Heart left ventricle (tissue), 16 donors: ENCODE measurements at regions of chr20 and their contacts with region 1.

Region 1: GRCh38 chr20:51541189-51542032 is 1.1 kb downstream of the NFATC2 start:
- DNase-seq: peak; percentile 82 to 92 (median 87)
- ATAC-seq: peak; percentile 92 to 95 (median 92)
- H3K4me3 ChIP-seq: peak overlapping the region in 10 of 12 donors; percentile 35 to 69 (median 54)
- H3K27ac ChIP-seq: peak overlapping the region; percentile 57 to 89 (median 78)
- H3K4me1 ChIP-seq: peaks cover 4 to 44% (median 34%) of the 10 kb centered on the region in 12 donors
- H3K27me3 ChIP-seq: peaks cover 0 to 10% (median 0%) of the 10 kb centered on the region in 9 donors
- CTCF ChIP-seq: peak in 1 of 12 donors; percentile 30
- POLR2A ChIP-seq: no peak

Region 2: GRCh38 chr20:51354769-51355319 is 186.6 kb before region 1 on chr20:
- intact Hi-C with region 1: no loop called
- DNase-seq: no peak
- ATAC-seq: peak in 1 of 4 donors; percentile 27
- H3K4me3 ChIP-seq: no peak overlapping the region
- H3K27ac ChIP-seq: no peak overlapping the region
- H3K4me1 ChIP-seq: peaks cover 0 to 5% (median 0%) of the 10 kb centered on the region in 12 donors
- H3K27me3 ChIP-seq: no peaks in the 10 kb centered on the region
- CTCF ChIP-seq: no peak
- POLR2A ChIP-seq: no peak

Region 3: GRCh38 chr20:51423290-51423667 is 118.1 kb before region 1 on chr20:
- intact Hi-C with region 1: no loop called
- DNase-seq: no peak
- ATAC-seq: no peak
- H3K4me3 ChIP-seq: no peak overlapping the region
- H3K27ac ChIP-seq: no peak overlapping the region
- H3K4me1 ChIP-seq: peaks cover 0 to 23% (median 7%) of the 10 kb centered on the region in 12 donors
- H3K27me3 ChIP-seq: no peaks in the 10 kb centered on the region
- CTCF ChIP-seq: no peak
- POLR2A ChIP-seq: no peak

Region 4: DNA sequence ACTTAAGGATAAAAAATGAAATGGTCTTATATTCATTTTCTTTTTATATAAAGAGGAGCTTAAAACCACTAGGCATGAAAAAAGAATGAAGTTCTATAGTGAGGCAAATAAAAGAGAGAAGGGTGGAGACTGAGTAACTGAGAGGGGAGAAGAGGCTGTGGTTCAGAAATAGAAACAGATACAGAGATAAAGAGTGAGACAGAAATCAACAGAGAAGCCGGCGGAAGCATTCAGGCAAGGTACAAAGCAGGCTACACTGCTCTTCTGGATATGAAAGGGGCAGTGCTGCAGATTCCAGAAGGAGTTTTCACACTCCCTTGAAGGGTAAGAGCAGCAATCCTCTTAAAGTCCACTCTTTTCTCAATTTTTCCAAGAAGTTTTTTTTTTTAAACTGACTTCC is 28.8 kb before region 1 on chr20:
- intact Hi-C with region 1: no loop called
- DNase-seq: no peak
- ATAC-seq: no peak
- H3K4me3 ChIP-seq: no peak overlapping the region
- H3K27ac ChIP-seq: peak overlapping the region in 1 of 12 donors; percentile 30
- H3K4me1 ChIP-seq: peaks cover 0 to 26% (median under 1%) of the 10 kb centered on the region in 12 donors
- H3K27me3 ChIP-seq: no peaks in the 10 kb centered on the region
- CTCF ChIP-seq: no peak
- POLR2A ChIP-seq: no peak

Region 5: GRCh38 chr20:51595058-51595532 is 53.7 kb after region 1 on chr20:
- intact Hi-C with region 1: loop called in 1 of 10 experiments (anchors 10 kb)
- DNase-seq: peak; percentile 86 to 92 (median 89)
- ATAC-seq: peak; percentile 96 to 99 (median 97)
- H3K4me3 ChIP-seq: peak overlapping the region in 1 of 12 donors; percentile 17
- H3K27ac ChIP-seq: peak overlapping the region in 2 of 12 donors; percentile 1 to 7
- H3K4me1 ChIP-seq: peaks cover 0 to 14% (median 4%) of the 10 kb centered on the region in 12 donors
- H3K27me3 ChIP-seq: no peaks in the 10 kb centered on the region
- CTCF ChIP-seq: peak; percentile 81 to 92 (median 87)
- POLR2A ChIP-seq: no peak

Region 6: GRCh38 chr20:51650685-51651134 is 109.3 kb after region 1 on chr20:
- intact Hi-C with region 1: no loop called
- DNase-seq: no peak
- ATAC-seq: peak in 1 of 4 donors; percentile 52
- H3K4me3 ChIP-seq: no peak overlapping the region
- H3K27ac ChIP-seq: peak overlapping the region in 1 of 12 donors; percentile 61
- H3K4me1 ChIP-seq: peaks cover 0 to 25% (median 0%) of the 10 kb centered on the region in 12 donors
- H3K27me3 ChIP-seq: no peaks in the 10 kb centered on the region
- CTCF ChIP-seq: no peak
- POLR2A ChIP-seq: no peak